ENCODE measurements at regions of chr13 and their contacts with region 1.

Region 1: GRCh38 chr13:66414196-66414800 is 815.8 kb downstream of the PCDH9 start:
- DNase-seq: no peak
- H3K4me3 ChIP-seq: no peak overlapping the region
- H3K27ac ChIP-seq: no peak overlapping the region
- H3K4me1 ChIP-seq: no peaks in the 10 kb centered on the region
- CTCF ChIP-seq: no peak

Region 2: GRCh38 chr13:66429156-66429555 is 14.9 kb after region 1 on chr13:
- CTCF ChIA-PET with region 1: no interaction called
- POLR2A ChIA-PET with region 1: interaction called, 16 read pairs
- intact Hi-C with region 1: no loop called
- DNase-seq: no peak
- H3K4me3 ChIP-seq: no peak overlapping the region
- H3K27ac ChIP-seq: no peak overlapping the region
- H3K4me1 ChIP-seq: no peaks in the 10 kb centered on the region
- CTCF ChIP-seq: no peak

Region 3: DNA sequence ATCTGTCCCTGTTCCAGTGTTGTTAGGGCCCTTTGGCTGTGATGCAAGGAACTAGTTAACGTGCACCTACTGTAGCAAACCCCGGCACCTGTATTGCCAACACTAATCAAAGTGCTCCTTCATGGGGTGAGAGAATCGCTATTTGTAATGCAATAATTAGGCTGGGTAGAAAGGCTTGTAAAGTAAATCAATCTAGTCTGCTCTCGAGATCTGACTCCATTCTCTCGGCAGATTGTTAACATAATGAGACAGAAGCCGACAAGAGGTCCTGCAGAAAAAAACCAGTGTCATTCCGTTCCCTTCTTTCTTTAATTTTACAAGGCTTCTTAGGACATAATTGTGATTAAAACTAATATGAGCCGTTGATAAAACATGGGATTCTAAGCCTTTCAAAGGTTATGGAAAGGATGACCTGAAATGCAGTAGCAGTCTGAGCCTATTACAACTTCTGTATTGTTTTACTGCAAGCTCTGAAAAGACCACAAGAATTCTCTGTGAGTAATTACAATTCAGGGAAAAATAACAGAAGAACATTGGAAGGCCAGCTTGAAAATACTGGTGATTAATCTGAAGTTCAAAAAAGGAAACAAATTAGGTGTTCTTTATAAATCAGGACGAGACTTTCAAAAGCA is 285.9 kb after region 1 on chr13:
- CTCF ChIA-PET with region 1: no interaction called
- POLR2A ChIA-PET with region 1: no interaction called
- intact Hi-C with region 1: no loop called
- DNase-seq: no peak
- H3K4me3 ChIP-seq: no peak overlapping the region
- H3K27ac ChIP-seq: no peak overlapping the region
- H3K4me1 ChIP-seq: no peaks in the 10 kb centered on the region
- CTCF ChIP-seq: no peak

Measured in OCI-LY7 (cell line).